Naive thymus-derived CD4-positive, alpha-beta T cell (primary cell): ENCODE measurements at regions of chr12 and their contacts with region 1.

Region 1: DNA sequence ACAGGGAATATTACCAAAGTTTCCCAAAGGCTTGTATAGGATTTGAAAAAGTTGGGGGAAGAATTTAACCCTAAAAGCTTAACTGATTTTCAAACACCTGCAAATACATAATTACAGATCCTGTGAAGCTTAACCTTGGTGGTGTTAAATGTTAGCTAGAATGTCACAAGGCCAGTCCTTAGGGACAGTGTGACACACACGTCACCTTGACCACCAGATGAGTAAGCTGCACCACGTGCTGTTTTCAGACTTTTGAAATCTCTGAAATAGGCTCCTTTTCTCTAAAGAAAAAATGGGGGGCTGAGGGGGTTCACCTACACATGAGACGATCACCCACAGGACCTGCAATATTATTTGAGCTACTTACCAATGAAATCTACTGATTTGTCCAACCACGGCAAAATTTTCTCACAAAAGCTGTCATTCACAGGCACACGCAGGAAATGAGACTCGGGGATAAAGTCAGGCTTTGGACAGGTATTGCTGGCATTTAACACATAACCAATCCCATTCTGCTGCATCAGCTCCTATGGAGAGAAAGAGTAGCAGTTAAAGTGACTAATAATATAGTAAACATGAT is 75.9 kb downstream of the DUSP16 start:
- DNase-seq: no peak
- ATAC-seq: no peak
- H3K4me3 ChIP-seq: no peak overlapping the region
- H3K4me3 Mint-ChIP-seq: no peak overlapping the region
- H3K27ac ChIP-seq: no peak overlapping the region
- H3K27ac Mint-ChIP-seq: peak overlapping the region in 6 of 9 donors; percentile 48 to 83 (median 68)
- H3K4me1 ChIP-seq: peaks cover 15 to 16% of the 10 kb centered on the region in 2 donors
- H3K4me1 Mint-ChIP-seq: peaks cover 12 to 43% (median 37%) of the 10 kb centered on the region in 7 donors
- H3K27me3 ChIP-seq: no peaks in the 10 kb centered on the region
- H3K27me3 Mint-ChIP-seq: no peaks in the 10 kb centered on the region

Region 2: GRCh38 chr12:12138203-12139154 is 348.3 kb before region 1 on chr12:
- CTCF ChIA-PET with region 1: no interaction called
- POLR2A ChIA-PET with region 1: no interaction called
- intact Hi-C with region 1: no loop called
- DNase-seq: no peak
- ATAC-seq: no peak
- H3K4me3 ChIP-seq: no peak overlapping the region
- H3K4me3 Mint-ChIP-seq: no peak overlapping the region
- H3K27ac ChIP-seq: no peak overlapping the region
- H3K27ac Mint-ChIP-seq: no peak overlapping the region
- H3K4me1 ChIP-seq: no peaks in the 10 kb centered on the region
- H3K4me1 Mint-ChIP-seq: peaks cover 0 to 6% (median 0%) of the 10 kb centered on the region in 7 donors
- H3K27me3 ChIP-seq: no peaks in the 10 kb centered on the region
- H3K27me3 Mint-ChIP-seq: peaks cover 0 to 19% (median 0%) of the 10 kb centered on the region in 5 donors

Region 3: DNA sequence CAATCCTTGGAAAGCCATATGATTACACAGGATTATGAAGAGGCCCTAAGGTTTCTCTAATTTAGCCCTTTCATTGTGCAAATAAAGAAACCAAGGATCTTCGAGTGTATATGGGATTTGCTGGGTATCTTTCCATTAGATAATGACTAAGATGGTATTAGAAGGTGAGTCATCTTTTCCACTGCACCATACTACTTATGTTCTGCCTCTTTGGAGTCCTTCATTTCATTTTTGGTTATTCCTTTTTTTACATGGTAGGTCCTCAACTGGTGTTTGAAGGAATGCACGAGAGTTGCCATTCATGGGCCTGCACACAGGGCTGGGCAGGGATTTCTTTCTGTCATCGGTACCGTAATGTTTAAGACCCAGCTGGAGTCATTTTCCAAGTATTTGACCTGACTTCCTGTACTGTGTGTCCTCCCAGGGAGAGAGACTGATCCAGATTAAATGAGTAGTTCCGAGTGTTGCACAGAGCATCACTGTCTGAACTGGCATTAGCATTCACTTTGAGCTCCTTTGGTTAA is 44.1 kb before region 1 on chr12:
- CTCF ChIA-PET with region 1: no interaction called
- POLR2A ChIA-PET with region 1: interaction called, 10 read pairs
- intact Hi-C with region 1: loop called (anchors 1 kb)
- DNase-seq: peak in 1 of 9 donors; percentile 32
- ATAC-seq: no peak
- H3K4me3 ChIP-seq: no peak overlapping the region
- H3K4me3 Mint-ChIP-seq: peak overlapping the region in 9 of 10 donors; percentile 9 to 78 (median 56)
- H3K27ac ChIP-seq: peak overlapping the region; percentile 61
- H3K27ac Mint-ChIP-seq: peak overlapping the region; percentile 92 to 99 (median 97)
- H3K4me1 ChIP-seq: peaks cover 52 to 54% of the 10 kb centered on the region in 2 donors
- H3K4me1 Mint-ChIP-seq: peaks cover 39 to 72% (median 66%) of the 10 kb centered on the region in 7 donors
- H3K27me3 ChIP-seq: no peaks in the 10 kb centered on the region
- H3K27me3 Mint-ChIP-seq: no peaks in the 10 kb centered on the region

Region 4: GRCh38 chr12:12474931-12475795 is 11.6 kb before region 1 on chr12:
- CTCF ChIA-PET with region 1: interaction called, 3 read pairs
- POLR2A ChIA-PET with region 1: interaction called, 9 read pairs
- intact Hi-C with region 1: loop called in 1 of 2 experiments (anchors 1 kb)
- DNase-seq: peak in 3 of 9 donors; percentile 22 to 49 (median 37)
- ATAC-seq: peak; percentile 84
- H3K4me3 ChIP-seq: peak overlapping the region; percentile 7
- H3K4me3 Mint-ChIP-seq: peak overlapping the region in 9 of 10 donors; percentile 11 to 76 (median 43)
- H3K27ac ChIP-seq: peak overlapping the region; percentile 39
- H3K27ac Mint-ChIP-seq: peak overlapping the region; percentile 72 to 95 (median 91)
- H3K4me1 ChIP-seq: peaks cover 7 to 17% of the 10 kb centered on the region in 2 donors
- H3K4me1 Mint-ChIP-seq: peaks cover 10 to 72% (median 42%) of the 10 kb centered on the region in 7 donors
- H3K27me3 ChIP-seq: no peaks in the 10 kb centered on the region
- H3K27me3 Mint-ChIP-seq: no peaks in the 10 kb centered on the region

Region 5: GRCh38 chr12:12527820-12528296 is 41.1 kb after region 1 on chr12:
- CTCF ChIA-PET with region 1: no interaction called
- POLR2A ChIA-PET with region 1: no interaction called
- intact Hi-C with region 1: loop called (anchors 5 kb)
- DNase-seq: peak in 5 of 9 donors; percentile 23 to 38 (median 23)
- ATAC-seq: peak; percentile 53
- H3K4me3 ChIP-seq: no peak overlapping the region
- H3K4me3 Mint-ChIP-seq: peak overlapping the region; percentile 44 to 65 (median 52)
- H3K27ac ChIP-seq: peak overlapping the region; percentile 70
- H3K27ac Mint-ChIP-seq: peak overlapping the region; percentile 80 to 96 (median 90)
- H3K4me1 ChIP-seq: peaks cover 16 to 33% of the 10 kb centered on the region in 2 donors
- H3K4me1 Mint-ChIP-seq: peaks cover 19 to 68% (median 50%) of the 10 kb centered on the region in 7 donors
- H3K27me3 ChIP-seq: no peaks in the 10 kb centered on the region
- H3K27me3 Mint-ChIP-seq: no peaks in the 10 kb centered on the region

Region 6: DNA sequence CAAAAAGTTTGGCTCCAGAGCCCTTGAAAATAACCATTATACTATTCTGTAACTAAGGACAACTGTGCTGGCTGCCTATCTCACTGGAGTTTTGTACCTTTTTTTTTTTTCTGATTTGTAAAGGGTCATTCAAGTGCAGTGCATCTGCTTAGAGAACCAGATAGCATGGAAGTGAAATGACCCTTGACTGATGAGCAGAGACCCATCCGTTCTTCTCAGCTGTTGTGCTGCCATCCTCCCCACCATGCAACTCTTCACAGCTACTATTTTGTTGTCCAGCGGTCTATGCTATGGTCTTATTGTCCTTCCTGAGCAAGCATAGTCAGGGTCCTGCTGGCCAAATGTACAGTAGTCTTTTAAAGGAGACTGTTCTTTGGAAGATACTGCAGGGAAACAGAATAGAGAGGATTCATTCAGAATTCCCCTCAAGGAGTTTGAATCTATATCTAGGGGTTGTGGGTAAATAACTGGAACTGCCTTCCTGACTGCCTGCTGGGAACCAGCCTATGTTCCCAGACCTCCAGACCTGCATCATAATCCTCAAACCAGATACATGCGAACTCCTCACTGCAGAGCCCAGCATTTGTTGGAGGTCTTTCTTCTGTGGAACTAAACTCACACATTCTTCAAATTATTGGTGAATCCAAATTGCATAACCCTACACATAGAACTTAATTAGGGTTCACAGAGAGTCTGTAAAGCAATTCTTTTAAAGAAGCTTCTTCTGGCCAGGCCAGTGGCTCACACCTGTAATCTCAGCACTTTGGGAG is 168.1 kb after region 1 on chr12:
- CTCF ChIA-PET with region 1: no interaction called
- POLR2A ChIA-PET with region 1: no interaction called
- intact Hi-C with region 1: loop called in 1 of 2 experiments (anchors 5 kb)
- DNase-seq: no peak
- ATAC-seq: no peak
- H3K4me3 ChIP-seq: no peak overlapping the region
- H3K4me3 Mint-ChIP-seq: no peak overlapping the region
- H3K27ac ChIP-seq: no peak overlapping the region
- H3K27ac Mint-ChIP-seq: peak overlapping the region in 2 of 9 donors; percentile 10 to 53
- H3K4me1 ChIP-seq: no peaks in the 10 kb centered on the region
- H3K4me1 Mint-ChIP-seq: peaks cover 0 to 19% (median 13%) of the 10 kb centered on the region in 7 donors
- H3K27me3 ChIP-seq: no peaks in the 10 kb centered on the region
- H3K27me3 Mint-ChIP-seq: no peaks in the 10 kb centered on the region

Region 7: DNA sequence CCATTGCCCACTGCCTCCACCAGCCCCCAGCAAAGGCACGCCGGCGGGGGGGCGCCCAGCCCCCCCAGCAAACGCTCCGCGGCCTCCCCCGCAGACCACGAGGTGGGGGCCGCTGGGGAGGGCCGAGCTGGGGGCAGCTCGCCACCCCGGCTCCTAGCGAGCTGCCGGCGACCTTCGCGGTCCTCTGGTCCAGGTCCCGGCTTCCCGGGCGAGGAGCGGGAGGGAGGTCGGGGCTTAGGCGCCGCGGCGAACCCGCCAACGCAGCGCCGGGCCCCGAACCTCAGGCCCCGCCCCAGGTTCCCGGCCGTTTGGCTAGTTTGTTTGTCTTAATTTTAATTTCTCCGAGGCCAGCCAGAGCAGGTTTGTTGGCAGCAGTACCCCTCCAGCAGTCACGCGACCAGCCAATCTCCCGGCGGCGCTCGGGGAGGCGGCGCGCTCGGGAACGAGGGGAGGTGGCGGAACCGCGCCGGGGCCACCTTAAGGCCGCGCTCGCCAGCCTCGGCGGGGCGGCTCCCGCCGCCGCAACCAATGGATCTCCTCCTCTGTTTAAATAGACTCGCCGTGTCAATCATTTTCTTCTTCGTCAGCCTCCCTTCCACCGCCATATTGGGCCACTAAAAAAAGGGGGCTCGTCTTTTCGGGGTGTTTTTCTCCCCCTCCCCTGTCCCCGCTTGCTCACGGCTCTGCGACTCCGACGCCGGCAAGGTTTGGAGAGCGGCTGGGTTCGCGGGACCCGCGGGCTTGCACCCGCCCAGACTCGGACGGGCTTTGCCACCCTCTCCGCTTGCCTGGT is 230.2 kb after region 1 on chr12 and contains the start of gene CDKN1B:
- CTCF ChIA-PET with region 1: no interaction called
- POLR2A ChIA-PET with region 1: interaction called, 8 read pairs
- intact Hi-C with region 1: loop called in 1 of 2 experiments (anchors 5 kb)
- DNase-seq: peak; percentile 68 to 91 (median 87)
- ATAC-seq: peak; percentile 77
- H3K4me3 ChIP-seq: peak within 1 kb of the TSS; percentile 94
- H3K4me3 Mint-ChIP-seq: peak within 1 kb of the TSS; percentile 87 to 100 (median 98)
- H3K27ac ChIP-seq: peak within 1 kb of the TSS; percentile 99
- H3K27ac Mint-ChIP-seq: peak within 1 kb of the TSS; percentile 97 to 99 (median 99)
- H3K4me1 ChIP-seq: peaks cover 24 to 39% of the 10 kb centered on the region in 2 donors
- H3K4me1 Mint-ChIP-seq: peaks cover 43 to 66% (median 55%) of the 10 kb centered on the region in 7 donors
- H3K27me3 ChIP-seq: no peaks in the 10 kb centered on the region
- H3K27me3 Mint-ChIP-seq: no peaks in the 10 kb centered on the region
- total RNA-seq, gene CDKN1B: 105 to 205 (median 191) TPM

Region 8: GRCh38 chr12:12736759-12737676 is 250.3 kb after region 1 on chr12:
- CTCF ChIA-PET with region 1: no interaction called
- POLR2A ChIA-PET with region 1: interaction called, 5 read pairs
- intact Hi-C with region 1: loop called in 1 of 2 experiments (anchors 5 kb)
- DNase-seq: peak in 7 of 9 donors; percentile 32 to 59 (median 39)
- ATAC-seq: peak; percentile 93
- H3K4me3 ChIP-seq: peak overlapping the region; percentile 28
- H3K4me3 Mint-ChIP-seq: peak overlapping the region; percentile 53 to 82 (median 68)
- H3K27ac ChIP-seq: peak overlapping the region; percentile 54
- H3K27ac Mint-ChIP-seq: peak overlapping the region; percentile 75 to 93 (median 85)
- H3K4me1 ChIP-seq: peaks cover 9 to 33% of the 10 kb centered on the region in 2 donors
- H3K4me1 Mint-ChIP-seq: peaks cover 21 to 65% (median 35%) of the 10 kb centered on the region in 7 donors
- H3K27me3 ChIP-seq: no peaks in the 10 kb centered on the region
- H3K27me3 Mint-ChIP-seq: no peaks in the 10 kb centered on the region